T-cell (primary cell): ENCODE measurements at regions of chr17 and their contacts with region 1.

Region 1: GRCh38 chr17:45123930-45124796 is 8.2 kb downstream of the PLCD3 start:
- DNase-seq: peak in 3 of 35 experiments; percentile 13 to 33 (median 28)
- ATAC-seq: peak; percentile 34 to 82 (median 60)
- H3K4me3 ChIP-seq: no peak overlapping the region
- H3K4me3 Mint-ChIP-seq: no peak overlapping the region
- H3K27ac ChIP-seq: no peak overlapping the region
- H3K27ac Mint-ChIP-seq: peak overlapping the region in 1 of 2 donors; percentile 39
- H3K4me1 ChIP-seq: peaks cover 0 to 8% of the 10 kb centered on the region in 2 experiments
- H3K4me1 Mint-ChIP-seq: peaks cover 0 to 3% (median 0%) of the 10 kb centered on the region in 3 donors
- H3K27me3 ChIP-seq: peaks cover 0 to 10% of the 10 kb centered on the region in 2 experiments
- H3K27me3 Mint-ChIP-seq: peaks cover 0 to 4% of the 10 kb centered on the region in 2 donors

Region 2: DNA sequence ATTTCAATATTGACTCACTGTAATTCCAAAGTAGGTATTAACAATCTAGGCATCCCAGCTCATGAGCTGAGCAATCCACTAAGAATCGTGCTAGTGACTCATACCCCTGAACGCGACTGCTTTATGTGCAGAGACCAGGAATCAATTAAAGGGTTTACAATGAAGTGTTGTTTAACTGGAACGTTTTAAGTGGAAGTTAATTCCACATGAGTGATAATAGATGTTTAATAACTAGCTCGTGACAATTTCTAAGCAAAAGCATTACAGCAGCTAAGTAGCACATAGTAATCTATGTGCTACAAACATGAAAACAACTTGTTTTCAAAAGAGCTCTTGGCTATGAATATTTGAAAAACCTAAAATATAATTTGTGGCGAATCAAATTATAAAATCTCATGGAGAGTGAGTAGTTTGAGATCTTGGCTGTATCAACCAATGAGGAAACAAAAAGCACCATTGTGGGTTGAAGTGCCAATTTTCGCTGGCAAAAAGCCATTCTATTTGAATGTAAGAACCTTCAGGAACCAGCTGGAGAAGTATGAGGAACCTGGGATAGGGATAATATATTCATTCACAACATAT is 303.4 kb before region 1 on chr17:
- CTCF ChIA-PET with region 1: no interaction called
- POLR2A ChIA-PET with region 1: interaction called in 1 of 2 experiments, 12 read pairs
- DNase-seq: no peak
- ATAC-seq: no peak
- H3K4me3 ChIP-seq: no peak overlapping the region
- H3K4me3 Mint-ChIP-seq: no peak overlapping the region
- H3K27ac ChIP-seq: no peak overlapping the region
- H3K27ac Mint-ChIP-seq: no peak overlapping the region
- H3K4me1 ChIP-seq: no peaks in the 10 kb centered on the region
- H3K4me1 Mint-ChIP-seq: no peaks in the 10 kb centered on the region
- H3K27me3 ChIP-seq: peaks cover 0 to 36% of the 10 kb centered on the region in 2 experiments
- H3K27me3 Mint-ChIP-seq: peaks cover 5 to 32% of the 10 kb centered on the region in 2 donors